PC-9 (cell line): ENCODE measurements at regions of chr6 and their contacts with region 1.

Region 1: DNA sequence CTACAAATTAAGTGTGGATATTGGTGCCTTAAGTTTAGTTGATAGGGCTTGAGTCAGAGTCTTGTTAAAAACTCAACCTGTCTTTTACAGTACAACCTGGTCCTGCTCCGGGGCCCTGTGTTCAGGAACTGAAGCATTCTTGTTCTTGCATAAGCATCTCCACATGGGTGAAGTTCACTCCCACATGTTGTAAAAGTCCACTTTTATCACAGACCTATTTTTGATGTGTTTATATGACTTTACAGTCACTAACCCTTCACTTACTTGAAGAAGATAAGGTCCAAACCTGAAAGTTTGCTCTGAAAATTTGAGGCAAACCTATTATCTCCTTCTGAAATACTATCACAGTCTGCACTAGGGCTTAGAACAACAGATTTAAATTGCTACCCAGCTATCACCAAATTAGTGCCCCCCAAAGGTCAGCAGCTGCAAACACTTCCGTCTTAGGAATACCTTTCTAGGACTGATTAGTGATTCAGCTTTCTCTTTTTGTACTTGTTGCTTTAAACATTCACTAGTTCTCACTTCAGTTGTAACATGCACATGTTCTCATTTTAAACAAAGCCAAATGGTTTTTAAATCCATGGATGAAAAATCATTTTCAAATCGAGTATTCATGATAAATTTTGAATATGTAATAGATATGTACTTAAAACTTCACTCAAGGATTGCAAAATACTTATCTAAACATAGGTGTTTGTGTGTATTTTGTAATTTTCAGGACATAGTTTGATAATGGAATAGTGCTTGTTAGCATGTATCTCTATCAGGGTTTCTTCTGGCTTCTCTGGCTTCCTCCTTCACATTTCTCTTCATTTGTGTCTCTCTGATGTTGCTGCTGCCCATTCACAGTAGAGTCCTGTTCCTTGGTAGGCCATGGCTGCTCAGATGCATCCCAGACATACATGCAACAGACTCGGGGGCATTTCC is 469.8 kb upstream of the SOX4 start:
- DNase-seq: no peak
- H3K4me3 ChIP-seq: no peak overlapping the region
- H3K27ac ChIP-seq: no peak overlapping the region
- H3K4me1 ChIP-seq: no peaks in the 10 kb centered on the region
- H3K27me3 ChIP-seq: no peaks in the 10 kb centered on the region
- CTCF ChIP-seq: no peak

Region 2: DNA sequence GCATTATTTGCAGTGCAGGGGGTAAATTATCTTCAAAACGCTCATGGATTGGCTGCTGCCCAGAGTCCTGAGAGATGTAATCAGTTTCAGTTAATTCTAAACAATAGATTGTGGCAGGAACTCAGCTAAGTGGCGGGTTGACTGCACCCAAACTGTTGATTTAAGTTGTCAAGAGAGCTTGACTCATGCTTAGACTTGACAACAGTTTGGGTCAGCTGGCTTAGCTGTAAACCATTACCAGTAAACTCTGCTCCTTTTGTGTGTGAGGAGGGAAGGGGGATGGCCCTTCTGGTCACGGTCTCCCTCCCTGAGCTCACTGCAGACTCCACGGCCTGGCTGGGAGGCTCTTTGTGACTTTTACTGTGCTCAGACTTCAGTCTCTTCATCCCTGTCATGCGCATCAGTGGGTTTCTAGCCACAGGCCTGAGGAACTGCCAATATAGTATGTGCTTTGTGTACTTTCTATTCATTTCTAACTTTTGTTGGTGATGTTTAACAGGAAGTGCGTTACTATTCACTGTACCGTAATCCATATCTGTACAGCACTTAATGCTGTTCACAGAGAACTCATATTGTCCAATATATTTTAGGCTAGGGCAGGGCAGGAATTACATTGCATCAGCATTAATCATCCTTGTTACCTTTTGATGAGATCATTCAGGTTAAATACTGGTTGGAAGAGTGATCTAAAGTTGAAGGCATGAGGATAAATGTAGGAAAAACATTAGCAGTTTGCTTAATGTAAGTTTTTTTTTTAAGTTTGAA is 101.2 kb before region 1 on chr6:
- CTCF ChIA-PET with region 1: no interaction called
- POLR2A ChIA-PET with region 1: no interaction called
- intact Hi-C with region 1: no loop called
- DNase-seq: peak; percentile 62 to 77
- H3K4me3 ChIP-seq: no peak overlapping the region
- H3K27ac ChIP-seq: peak overlapping the region; percentile 78
- H3K4me1 ChIP-seq: peaks cover 26% of the 10 kb centered on the region
- H3K27me3 ChIP-seq: no peaks in the 10 kb centered on the region
- CTCF ChIP-seq: no peak

Region 3: DNA sequence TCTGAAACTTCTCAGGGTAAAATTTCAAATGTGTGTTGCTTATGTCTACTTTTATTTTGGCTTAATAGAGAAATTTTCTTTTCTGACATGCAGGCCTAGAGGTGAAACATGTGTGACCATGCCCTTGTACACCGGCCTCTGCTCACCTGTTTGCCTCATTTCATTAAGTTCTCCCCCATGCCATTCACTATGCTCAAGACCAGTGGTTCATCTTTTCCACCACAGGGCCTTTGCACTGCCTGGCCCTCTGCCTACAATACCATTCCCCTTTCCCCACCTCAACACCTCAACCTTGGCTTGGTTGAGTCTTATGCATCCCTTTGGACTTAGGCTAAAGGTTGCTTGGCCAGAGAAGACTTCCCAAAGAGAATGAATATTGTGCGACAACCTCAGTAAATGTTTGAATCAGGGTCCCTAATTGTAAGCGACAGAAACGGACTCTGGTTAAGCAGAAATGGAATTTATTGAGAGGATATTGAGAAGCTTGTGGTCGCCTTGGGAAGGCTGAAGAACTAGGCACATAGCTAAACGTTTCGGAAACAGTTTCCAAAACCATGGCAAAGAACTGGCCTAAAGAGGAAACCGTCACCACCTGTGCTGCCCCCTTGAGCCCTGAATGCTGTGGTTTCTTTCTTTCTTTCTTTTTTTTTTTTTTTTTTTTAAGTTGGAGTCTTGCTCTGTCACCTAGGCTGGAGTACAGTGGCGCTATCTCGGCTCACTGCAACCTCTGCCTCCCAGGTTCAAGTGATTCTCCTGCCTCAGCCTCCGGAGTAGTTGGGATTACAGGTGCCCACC is 622.0 kb after region 1 on chr6:
- CTCF ChIA-PET with region 1: no interaction called
- POLR2A ChIA-PET with region 1: interaction called, 15 read pairs
- intact Hi-C with region 1: no loop called
- DNase-seq: no peak
- H3K4me3 ChIP-seq: no peak overlapping the region
- H3K27ac ChIP-seq: no peak overlapping the region
- H3K4me1 ChIP-seq: peaks cover 40% of the 10 kb centered on the region
- H3K27me3 ChIP-seq: no peaks in the 10 kb centered on the region
- CTCF ChIP-seq: no peak